ENCODE measurements at regions of chr12 and their contacts with region 1.

Region 1: DNA sequence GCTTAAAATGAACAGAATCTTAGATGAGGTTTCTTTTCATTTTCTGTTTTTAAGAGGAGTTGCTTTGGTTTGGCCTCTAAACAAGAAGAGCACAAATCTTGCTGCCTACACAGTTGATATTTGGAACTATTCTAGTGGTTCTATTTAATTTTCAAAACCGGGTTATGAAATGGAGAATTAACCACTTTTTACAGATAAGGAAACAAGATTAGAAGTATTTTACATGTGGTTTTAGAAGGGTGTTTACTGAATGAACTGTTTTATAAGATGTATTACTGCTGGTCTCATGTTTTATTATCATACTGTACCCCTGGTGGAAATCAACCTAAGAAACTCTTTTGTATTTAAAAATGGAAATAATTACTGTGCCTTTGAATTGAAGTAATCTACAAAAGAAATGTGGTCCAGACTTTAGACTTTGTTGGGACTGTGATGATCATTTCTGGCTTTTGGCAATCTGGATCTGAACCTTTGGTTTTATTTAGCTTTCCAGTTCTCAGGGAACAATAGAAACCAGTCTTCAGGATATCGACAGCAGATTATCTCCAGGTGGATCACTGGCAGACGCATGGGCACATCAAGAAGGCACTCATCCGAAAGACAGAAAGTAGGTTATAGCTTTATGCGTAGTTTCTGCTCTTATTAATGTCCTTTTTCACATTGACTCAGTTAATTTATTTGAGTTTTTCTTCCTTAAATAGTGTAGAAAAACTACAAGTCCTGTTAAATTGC is 43.2 kb downstream of the TBK1 start:
- DNase-seq: no peak
- ATAC-seq: no peak
- H3K4me3 ChIP-seq: no peak overlapping the region
- H3K27ac ChIP-seq: no peak overlapping the region
- H3K4me1 ChIP-seq: no peaks in the 10 kb centered on the region
- H3K27me3 ChIP-seq: no peaks in the 10 kb centered on the region
- CTCF ChIP-seq: no peak

Region 2: DNA sequence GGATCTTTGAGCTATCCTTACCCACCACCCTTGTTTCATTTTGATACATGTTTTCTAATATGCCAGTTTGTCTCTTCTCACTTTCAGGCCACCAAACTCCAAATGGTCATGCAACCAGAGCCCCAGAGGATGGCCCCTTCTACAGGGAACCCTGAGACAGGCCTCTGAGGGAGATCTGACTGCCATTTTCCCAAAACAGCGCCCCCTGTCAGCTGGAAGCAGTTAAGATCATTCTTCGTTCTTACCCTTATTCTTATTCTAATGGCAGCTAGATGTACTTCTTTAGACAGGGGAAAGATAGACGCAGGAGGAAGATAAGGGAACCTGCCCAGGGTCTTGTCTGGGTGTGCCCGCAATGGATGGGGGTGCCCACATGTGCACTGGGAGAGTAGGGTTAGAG is 143.0 kb before region 1 on chr12:
- intact Hi-C with region 1: no loop called
- DNase-seq: no peak
- ATAC-seq: no peak
- H3K4me3 ChIP-seq: no peak overlapping the region
- H3K27ac ChIP-seq: no peak overlapping the region
- H3K4me1 ChIP-seq: no peaks in the 10 kb centered on the region
- H3K27me3 ChIP-seq: no peaks in the 10 kb centered on the region
- CTCF ChIP-seq: no peak

Region 3: DNA sequence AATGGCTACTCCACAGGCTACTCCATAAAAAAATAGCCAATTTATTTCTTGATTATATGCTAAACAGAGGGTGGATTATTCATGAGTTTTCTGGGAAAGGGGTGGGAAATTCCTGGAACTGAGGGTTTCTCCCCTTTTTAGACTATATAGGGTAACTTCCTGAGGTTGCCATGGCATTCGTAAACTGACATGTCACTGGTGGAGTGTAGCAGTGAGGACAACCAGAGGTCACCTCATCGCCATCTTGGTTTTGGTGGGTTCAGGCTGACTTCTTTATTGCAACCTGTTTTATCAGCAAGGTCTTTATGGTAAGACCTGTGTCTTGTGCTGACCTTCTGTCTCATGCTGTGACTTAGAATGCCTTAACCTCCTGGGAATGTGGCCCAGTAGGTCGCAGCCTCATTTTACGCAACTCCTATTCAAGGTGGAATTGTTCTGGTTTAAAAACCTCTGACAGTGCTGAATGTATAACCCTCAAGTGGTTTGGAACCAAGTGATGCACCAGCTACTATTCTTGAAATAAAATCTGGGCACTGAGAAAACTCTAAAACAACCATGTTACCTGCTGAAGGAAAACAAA is 132.4 kb before region 1 on chr12:
- intact Hi-C with region 1: no loop called
- DNase-seq: no peak
- ATAC-seq: no peak
- H3K4me3 ChIP-seq: no peak overlapping the region
- H3K27ac ChIP-seq: no peak overlapping the region
- H3K4me1 ChIP-seq: no peaks in the 10 kb centered on the region
- H3K27me3 ChIP-seq: no peaks in the 10 kb centered on the region
- CTCF ChIP-seq: no peak

Region 4: GRCh38 chr12:64390275-64390851 is 104.8 kb before region 1 on chr12 and contains the start of gene C12orf56:
- intact Hi-C with region 1: no loop called
- DNase-seq: peak in 1 of 2 donors; percentile 16
- ATAC-seq: peak in 1 of 4 donors; percentile 40
- H3K4me3 ChIP-seq: peak within 1 kb of the TSS; percentile 56
- H3K27ac ChIP-seq: no peak within 1 kb of the TSS
- H3K4me1 ChIP-seq: no peaks in the 10 kb centered on the region
- H3K27me3 ChIP-seq: peaks cover 0 to 30% (median 6%) of the 10 kb centered on the region in 3 donors
- CTCF ChIP-seq: no peak
- total RNA-seq, gene C12orf56: not detected

Region 5: DNA sequence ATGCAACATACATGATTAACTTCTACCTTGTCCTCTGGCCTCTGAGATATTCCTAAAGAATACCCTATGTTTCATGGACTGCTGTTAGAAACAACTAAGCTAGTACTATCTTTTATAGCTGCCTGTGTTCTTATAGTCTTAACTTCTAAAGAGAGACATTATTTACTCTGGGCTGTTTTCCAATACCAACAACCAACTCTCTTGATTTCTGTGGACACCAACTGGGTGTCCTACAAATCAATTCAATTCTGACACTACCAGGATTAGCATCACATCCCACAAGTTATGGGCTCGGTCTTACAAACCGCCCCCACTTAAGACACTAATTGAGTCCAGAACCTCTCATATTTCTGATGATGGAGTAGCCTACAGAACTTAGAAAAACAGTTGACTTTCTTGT is 82.7 kb before region 1 on chr12:
- intact Hi-C with region 1: loop called in 1 of 2 experiments (anchors 5 kb)
- DNase-seq: no peak
- ATAC-seq: no peak
- H3K4me3 ChIP-seq: no peak overlapping the region
- H3K27ac ChIP-seq: no peak overlapping the region
- H3K4me1 ChIP-seq: no peaks in the 10 kb centered on the region
- H3K27me3 ChIP-seq: no peaks in the 10 kb centered on the region
- CTCF ChIP-seq: no peak

Region 6: GRCh38 chr12:64431791-64432190 is 63.4 kb before region 1 on chr12:
- intact Hi-C with region 1: loop called in 1 of 2 experiments (anchors 5 kb)
- DNase-seq: no peak
- ATAC-seq: no peak
- H3K4me3 ChIP-seq: no peak overlapping the region
- H3K27ac ChIP-seq: no peak overlapping the region
- H3K4me1 ChIP-seq: no peaks in the 10 kb centered on the region
- H3K27me3 ChIP-seq: no peaks in the 10 kb centered on the region
- CTCF ChIP-seq: no peak

Region 7: DNA sequence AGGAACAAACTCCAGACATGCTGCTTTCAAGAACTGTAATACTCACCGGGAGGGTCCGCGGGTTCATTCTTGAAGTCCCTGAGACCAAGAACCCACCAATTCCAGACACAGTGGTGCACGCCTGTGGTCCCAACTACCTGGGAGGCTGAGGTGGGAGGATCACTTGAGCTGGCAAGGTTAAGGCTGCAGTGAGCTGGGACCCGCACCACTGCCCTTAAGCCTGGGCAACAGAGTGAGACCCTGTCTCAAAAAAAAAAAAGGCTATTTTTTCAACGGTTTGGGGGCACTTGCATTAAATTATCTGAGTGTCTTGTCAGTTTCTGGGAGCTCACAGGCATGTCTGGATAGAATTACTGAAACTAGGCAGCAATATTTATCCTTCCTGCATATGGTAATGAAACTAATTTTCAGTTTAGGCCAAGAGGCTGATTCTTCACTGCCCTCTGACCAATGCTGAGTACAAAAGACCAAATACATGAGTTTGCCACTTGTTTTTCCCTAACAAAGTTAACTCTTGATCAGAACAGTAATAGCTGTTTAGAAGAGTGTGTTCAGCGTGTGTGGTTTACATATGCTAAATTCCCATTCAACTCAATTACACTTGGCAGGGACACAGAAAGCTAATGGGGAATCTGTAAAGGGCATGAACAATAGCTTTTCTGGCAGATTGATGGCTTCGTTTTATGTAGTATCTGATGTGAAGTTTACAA is 49.4 kb after region 1 on chr12:
- intact Hi-C with region 1: loop called in 1 of 2 experiments (anchors 2 kb)
- DNase-seq: no peak
- ATAC-seq: no peak
- H3K4me3 ChIP-seq: no peak overlapping the region
- H3K27ac ChIP-seq: no peak overlapping the region
- H3K4me1 ChIP-seq: no peaks in the 10 kb centered on the region
- H3K27me3 ChIP-seq: no peaks in the 10 kb centered on the region
- CTCF ChIP-seq: no peak

Measured in psoas muscle (tissue), 8 donors.